Psoas muscle (tissue), 8 donors: ENCODE measurements at regions of chr1 and their contacts with region 1.

Region 1: DNA sequence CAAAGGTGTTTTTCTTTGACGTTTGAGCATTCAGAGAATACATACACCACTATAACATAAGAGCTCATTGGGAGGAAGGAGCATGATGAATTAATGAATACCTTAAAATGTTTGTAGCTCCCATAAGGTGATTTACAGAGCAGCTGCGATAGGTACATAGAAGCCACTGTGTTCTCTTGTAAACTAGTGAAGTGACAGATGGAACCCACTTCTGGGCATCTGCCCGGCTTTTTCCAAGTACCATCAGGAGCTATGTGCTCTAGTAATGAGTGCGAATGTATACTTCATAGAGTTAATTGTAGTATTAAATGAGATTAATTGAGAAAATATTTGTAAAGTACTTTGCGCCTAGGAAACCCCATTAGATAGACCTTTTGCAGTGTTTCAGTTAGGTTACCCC is 48.4 kb downstream of the HENMT1 start:
- DNase-seq: no peak
- ATAC-seq: no peak
- H3K4me3 ChIP-seq: no peak overlapping the region
- H3K27ac ChIP-seq: no peak overlapping the region
- H3K4me1 ChIP-seq: no peaks in the 10 kb centered on the region
- H3K27me3 ChIP-seq: no peaks in the 10 kb centered on the region
- CTCF ChIP-seq: no peak

Region 2: DNA sequence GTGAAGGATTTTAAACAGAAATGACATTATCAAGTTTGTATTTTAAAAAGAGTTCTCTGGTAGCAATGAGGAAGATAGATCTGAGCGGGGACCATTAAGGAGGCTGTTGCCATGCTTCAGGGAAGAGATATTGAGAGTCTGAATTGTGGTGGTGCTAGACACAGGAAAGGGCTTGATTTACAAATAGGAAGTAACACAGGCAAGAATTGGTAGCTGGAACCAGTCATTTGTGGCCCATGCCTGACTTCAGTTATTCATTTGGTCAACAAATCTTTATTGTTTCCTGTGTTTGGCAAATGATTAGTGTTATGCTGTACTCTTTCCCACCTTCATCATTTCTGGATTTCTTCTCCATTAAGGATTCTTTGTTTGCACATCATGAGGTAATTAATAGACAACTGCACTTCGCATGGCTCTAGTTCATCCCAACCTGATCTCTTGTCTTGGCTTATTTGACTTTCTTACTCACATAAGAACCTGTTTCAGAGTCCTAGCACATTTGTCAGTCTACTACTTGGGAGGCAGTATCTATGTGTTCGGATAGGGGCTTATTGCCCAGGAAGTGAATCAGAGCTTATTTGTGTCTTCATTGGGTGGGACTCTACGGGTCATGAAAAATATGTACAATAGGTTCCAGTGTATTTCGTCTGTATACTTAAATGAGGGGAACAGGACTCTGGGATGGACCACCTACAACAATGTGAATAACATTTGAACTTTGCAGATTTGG is 20.3 kb before region 1 on chr1:
- intact Hi-C with region 1: loop called in 1 of 2 experiments (anchors 2 kb)
- DNase-seq: no peak
- ATAC-seq: no peak
- H3K4me3 ChIP-seq: no peak overlapping the region
- H3K27ac ChIP-seq: peak overlapping the region; percentile 56
- H3K4me1 ChIP-seq: no peaks in the 10 kb centered on the region
- H3K27me3 ChIP-seq: no peaks in the 10 kb centered on the region
- CTCF ChIP-seq: no peak